Activated T-helper 2 cell treated with anti-CD3 and anti-CD28 coated beads, Interferon-gamma antibody, Interleukin-2, Interleukin-4, amounts not matched to agents 10 μg/mL and 5 μg/mL and 100 μg/mL, durations not matched to agents 14 hours and 24 hours and 36 hours (primary cell): ENCODE measurements at regions of chr3 and their contacts with region 1.

Region 1: DNA sequence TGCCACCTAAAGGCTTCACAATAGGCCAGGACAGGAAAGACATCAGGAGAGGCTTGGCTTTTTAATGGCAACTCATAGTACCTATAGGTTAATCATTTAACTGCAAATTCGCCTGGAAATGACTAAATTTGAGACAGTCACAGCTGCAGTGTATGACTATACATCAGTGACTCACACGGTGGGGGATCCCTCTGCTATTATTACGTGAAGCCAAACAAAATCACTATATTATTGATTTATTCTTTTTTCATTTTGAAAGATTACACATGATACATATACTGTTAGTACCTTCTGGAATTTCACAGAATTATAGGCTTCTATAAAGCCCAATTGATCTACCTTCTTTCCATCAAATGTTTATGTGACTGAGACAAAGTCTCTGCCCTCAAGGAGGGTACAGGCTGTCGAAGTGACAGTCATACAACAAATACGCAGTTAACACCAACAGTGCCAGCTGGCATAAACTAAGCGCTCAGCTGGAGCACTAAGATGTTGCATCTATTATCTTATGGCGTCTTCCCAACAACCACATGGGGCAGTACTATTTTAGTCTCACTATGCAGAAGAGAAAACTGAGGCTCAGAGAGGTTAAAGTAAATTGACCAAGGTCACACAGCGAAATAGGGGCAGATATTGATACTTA is 82.0 kb upstream of the LMOD3 start:
- DNase-seq: no peak
- H3K4me3 Mint-ChIP-seq: peak overlapping the region; percentile 41
- H3K27ac Mint-ChIP-seq: peak overlapping the region; percentile 91
- H3K4me1 Mint-ChIP-seq: peaks cover 61% of the 10 kb centered on the region
- H3K27me3 Mint-ChIP-seq: no peaks in the 10 kb centered on the region

Region 2: GRCh38 chr3:68740087-68740486 is 464.3 kb before region 1 on chr3:
- intact Hi-C with region 1: no loop called
- DNase-seq: no peak
- H3K4me3 Mint-ChIP-seq: no peak overlapping the region
- H3K27ac Mint-ChIP-seq: no peak overlapping the region
- H3K4me1 Mint-ChIP-seq: no peaks in the 10 kb centered on the region
- H3K27me3 Mint-ChIP-seq: no peaks in the 10 kb centered on the region

Region 3: GRCh38 chr3:69219101-69219708 is 14.8 kb after region 1 on chr3:
- intact Hi-C with region 1: loop called (anchors 2 kb)
- DNase-seq: no peak
- H3K4me3 Mint-ChIP-seq: no peak overlapping the region
- H3K27ac Mint-ChIP-seq: peak overlapping the region; percentile 42
- H3K4me1 Mint-ChIP-seq: peaks cover 14% of the 10 kb centered on the region
- H3K27me3 Mint-ChIP-seq: no peaks in the 10 kb centered on the region

Region 4: DNA sequence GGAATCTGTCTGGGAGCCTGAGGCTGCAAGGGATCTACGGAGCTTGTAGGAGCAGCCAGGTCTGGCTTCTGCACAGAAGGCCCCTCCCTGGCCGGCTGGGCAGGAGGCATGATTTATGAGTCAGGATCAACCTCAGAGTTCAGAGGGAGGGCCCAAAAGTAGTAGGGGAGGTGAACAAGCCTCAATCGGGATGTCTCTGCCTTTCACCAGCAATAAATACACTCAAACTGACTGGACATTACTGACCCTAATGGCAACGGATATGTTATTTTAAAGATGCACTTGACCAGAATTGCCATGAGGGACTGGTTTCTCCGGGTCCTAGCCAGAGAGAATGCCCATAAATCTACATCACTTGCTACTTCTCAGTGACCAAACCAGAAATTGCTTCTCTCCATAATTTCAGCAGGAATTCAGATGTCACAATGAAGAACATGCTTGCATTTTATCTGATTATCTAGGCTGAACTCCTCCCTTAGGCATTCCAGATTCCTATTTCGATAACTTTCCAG is 27.5 kb after region 1 on chr3:
- intact Hi-C with region 1: no loop called
- DNase-seq: no peak
- H3K4me3 Mint-ChIP-seq: no peak overlapping the region
- H3K27ac Mint-ChIP-seq: no peak overlapping the region
- H3K4me1 Mint-ChIP-seq: peaks cover 14% of the 10 kb centered on the region
- H3K27me3 Mint-ChIP-seq: no peaks in the 10 kb centered on the region

Region 5: GRCh38 chr3:69425261-69425660 is 220.8 kb after region 1 on chr3:
- intact Hi-C with region 1: no loop called
- DNase-seq: peak; percentile 9
- H3K4me3 Mint-ChIP-seq: no peak overlapping the region
- H3K27ac Mint-ChIP-seq: no peak overlapping the region
- H3K4me1 Mint-ChIP-seq: peaks cover 7% of the 10 kb centered on the region
- H3K27me3 Mint-ChIP-seq: no peaks in the 10 kb centered on the region

Region 6: GRCh38 chr3:69961706-69962439 is 757.4 kb after region 1 on chr3:
- intact Hi-C with region 1: no loop called
- DNase-seq: no peak
- H3K4me3 Mint-ChIP-seq: no peak overlapping the region
- H3K27ac Mint-ChIP-seq: no peak overlapping the region
- H3K4me1 Mint-ChIP-seq: no peaks in the 10 kb centered on the region
- H3K27me3 Mint-ChIP-seq: no peaks in the 10 kb centered on the region